ENCODE measurements at regions of chr6 and their contacts with region 1.

Region 1: DNA sequence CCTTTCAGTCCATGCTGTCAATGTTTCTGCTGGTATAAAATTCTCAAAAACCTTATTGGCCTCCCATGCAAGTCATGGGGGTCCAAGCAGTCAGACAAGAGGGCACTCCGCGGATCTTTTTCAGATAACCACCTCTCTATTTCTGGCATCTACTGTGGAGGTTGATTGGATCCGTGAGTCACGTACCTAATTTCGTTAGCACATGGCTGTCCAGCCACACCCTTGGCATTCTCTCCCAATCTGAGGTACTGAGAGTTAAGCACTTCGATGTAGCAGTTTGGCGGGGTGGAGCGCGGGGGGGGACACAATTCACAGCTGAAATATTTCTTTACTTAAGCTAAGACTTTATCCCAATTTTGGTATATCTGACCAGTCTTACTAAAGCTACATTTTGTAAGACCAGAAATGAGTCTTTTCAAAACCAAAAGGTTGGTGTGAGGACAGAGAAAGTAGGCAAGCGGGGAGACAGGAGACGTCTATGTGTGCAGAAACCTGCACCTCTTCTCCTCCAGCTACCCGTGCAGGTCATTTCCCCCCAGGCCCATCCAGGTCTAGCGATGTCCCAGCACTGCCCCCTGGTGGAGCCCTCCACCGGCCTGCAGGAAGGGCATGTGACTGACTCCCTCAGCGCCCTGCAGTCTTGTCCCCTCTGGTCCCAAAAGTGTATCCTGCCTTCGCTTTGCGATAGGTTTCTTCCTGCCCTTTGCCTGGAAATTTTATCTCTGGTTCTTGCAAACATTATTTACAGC is 113.1 kb downstream of the ADAT2 start:
- DNase-seq: peak; percentile 93
- H3K4me3 Mint-ChIP-seq: peak overlapping the region; percentile 46
- H3K27ac Mint-ChIP-seq: peak overlapping the region; percentile 99
- H3K4me1 Mint-ChIP-seq: peaks cover 40% of the 10 kb centered on the region
- H3K27me3 Mint-ChIP-seq: no peaks in the 10 kb centered on the region
- CTCF ChIP-seq: peak; percentile 86

Region 2: GRCh38 chr6:142474531-142475289 is 862.7 kb before region 1 on chr6:
- CTCF ChIA-PET with region 1: interaction called, 5 read pairs
- POLR2A ChIA-PET with region 1: no interaction called
- intact Hi-C with region 1: loop called (anchors 2 kb)
- DNase-seq: peak; percentile 72
- H3K4me3 Mint-ChIP-seq: no peak overlapping the region
- H3K27ac Mint-ChIP-seq: no peak overlapping the region
- H3K4me1 Mint-ChIP-seq: peaks cover 7% of the 10 kb centered on the region
- H3K27me3 Mint-ChIP-seq: peaks cover 5% of the 10 kb centered on the region
- CTCF ChIP-seq: peak; percentile 66

Region 3: DNA sequence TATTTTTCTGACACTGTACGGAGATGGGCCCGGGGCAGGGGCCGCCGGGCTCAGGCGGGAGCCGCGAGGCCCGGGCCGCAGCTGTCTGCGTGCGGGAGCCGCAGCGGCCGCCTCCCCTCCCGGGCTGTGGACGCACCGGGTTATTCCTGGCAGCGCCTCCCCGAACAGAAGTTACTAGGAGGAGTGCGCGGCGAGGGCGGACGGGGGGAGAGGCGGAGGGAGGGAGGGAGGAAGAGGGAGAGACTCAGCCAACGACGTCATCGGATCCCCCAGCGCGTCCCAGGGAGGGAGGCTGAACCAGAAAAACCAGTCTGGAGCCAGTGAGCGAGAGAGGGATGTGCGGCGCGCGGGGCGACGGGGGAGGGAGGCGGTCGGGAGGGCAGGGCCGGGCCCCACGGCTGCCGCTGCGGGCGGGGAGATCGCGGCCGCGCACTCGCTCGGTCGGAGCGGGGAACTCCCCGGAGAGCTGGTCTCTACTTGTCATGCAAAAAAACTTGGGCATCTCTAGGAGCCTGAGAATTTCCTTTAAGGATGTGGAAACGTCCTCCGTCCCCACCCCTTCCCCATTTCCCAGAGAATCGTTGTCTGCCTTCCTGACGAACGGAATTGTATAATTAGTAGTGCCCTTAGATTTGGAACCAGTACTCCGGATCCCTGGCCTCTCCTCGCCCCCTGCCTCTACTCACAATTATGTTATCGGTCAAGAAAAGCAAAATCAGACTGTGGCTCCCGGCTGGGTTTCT is 391.0 kb before region 1 on chr6:
- CTCF ChIA-PET with region 1: interaction called, 4 read pairs
- POLR2A ChIA-PET with region 1: interaction called, 161 read pairs
- intact Hi-C with region 1: loop called (anchors 1 kb)
- DNase-seq: peak; percentile 99
- H3K4me3 Mint-ChIP-seq: peak overlapping the region; percentile 92
- H3K27ac Mint-ChIP-seq: peak overlapping the region; percentile 63
- H3K4me1 Mint-ChIP-seq: peaks cover 21% of the 10 kb centered on the region
- H3K27me3 Mint-ChIP-seq: no peaks in the 10 kb centered on the region
- CTCF ChIP-seq: no peak

Region 4: GRCh38 chr6:143232849-143233248 is 104.5 kb before region 1 on chr6:
- CTCF ChIA-PET with region 1: interaction called, 21 read pairs
- POLR2A ChIA-PET with region 1: interaction called, 20 read pairs
- intact Hi-C with region 1: loop called (anchors 2 kb)
- DNase-seq: peak; percentile 70
- H3K4me3 Mint-ChIP-seq: no peak overlapping the region
- H3K27ac Mint-ChIP-seq: peak overlapping the region; percentile 33
- H3K4me1 Mint-ChIP-seq: peaks cover 7% of the 10 kb centered on the region
- H3K27me3 Mint-ChIP-seq: no peaks in the 10 kb centered on the region
- CTCF ChIP-seq: peak; percentile 55

Region 5: GRCh38 chr6:143325379-143326140 is 11.8 kb before region 1 on chr6:
- CTCF ChIA-PET with region 1: interaction called, 17 read pairs
- POLR2A ChIA-PET with region 1: interaction called, 160 read pairs
- intact Hi-C with region 1: no loop called
- DNase-seq: peak; percentile 77
- H3K4me3 Mint-ChIP-seq: no peak overlapping the region
- H3K27ac Mint-ChIP-seq: no peak overlapping the region
- H3K4me1 Mint-ChIP-seq: peaks cover 13% of the 10 kb centered on the region
- H3K27me3 Mint-ChIP-seq: no peaks in the 10 kb centered on the region
- CTCF ChIP-seq: no peak

Region 6: GRCh38 chr6:143410859-143411270 is 73.5 kb after region 1 on chr6:
- CTCF ChIA-PET with region 1: interaction called, 5 read pairs
- POLR2A ChIA-PET with region 1: interaction called, 13 read pairs
- intact Hi-C with region 1: no loop called
- DNase-seq: peak; percentile 65
- H3K4me3 Mint-ChIP-seq: no peak overlapping the region
- H3K27ac Mint-ChIP-seq: peak overlapping the region; percentile 77
- H3K4me1 Mint-ChIP-seq: peaks cover 54% of the 10 kb centered on the region
- H3K27me3 Mint-ChIP-seq: no peaks in the 10 kb centered on the region
- CTCF ChIP-seq: no peak

Region 7: DNA sequence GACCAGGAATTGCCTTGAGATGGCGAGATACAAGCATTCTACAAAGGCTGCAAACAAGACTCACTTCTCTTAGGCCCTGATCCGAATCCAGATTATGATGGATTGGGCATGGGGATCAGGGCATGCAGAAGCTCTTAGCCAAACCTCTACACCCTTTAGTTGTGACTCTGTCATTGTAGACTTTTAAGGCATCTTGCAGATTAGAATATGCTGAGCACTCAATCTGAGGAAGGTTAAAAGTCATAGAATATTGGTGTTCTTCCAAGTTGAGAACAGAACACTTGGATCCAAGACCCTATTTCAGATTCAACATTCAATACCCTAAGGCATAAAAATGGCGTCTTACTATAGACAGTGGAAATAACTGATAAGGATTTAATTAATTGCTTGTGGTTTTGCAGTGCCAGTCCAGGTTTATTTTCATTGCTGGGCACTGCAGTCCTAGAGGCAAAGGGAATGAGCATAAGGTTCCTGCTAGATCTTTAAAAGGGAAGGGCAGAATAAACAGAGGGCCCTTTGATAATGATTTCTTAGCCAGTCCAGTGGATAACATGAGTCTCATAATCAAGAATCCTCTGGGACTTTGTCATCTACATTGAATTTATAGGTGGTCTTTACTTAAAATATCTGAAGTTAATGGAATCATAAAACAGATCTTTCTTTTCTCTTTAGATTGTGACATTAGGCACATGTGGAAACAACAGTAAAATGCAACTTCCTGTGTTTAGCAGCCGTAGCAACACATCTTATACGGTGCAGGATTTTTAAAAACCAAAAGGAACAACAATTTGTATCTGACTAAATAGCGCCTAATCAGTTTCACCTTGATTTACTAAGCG is 358.0 kb after region 1 on chr6:
- CTCF ChIA-PET with region 1: no interaction called
- POLR2A ChIA-PET with region 1: no interaction called
- intact Hi-C with region 1: no loop called
- DNase-seq: no peak
- H3K4me3 Mint-ChIP-seq: no peak overlapping the region
- H3K27ac Mint-ChIP-seq: no peak overlapping the region
- H3K4me1 Mint-ChIP-seq: no peaks in the 10 kb centered on the region
- H3K27me3 Mint-ChIP-seq: no peaks in the 10 kb centered on the region
- CTCF ChIP-seq: no peak

Measured in MCF 10A (cell line).